CD4-positive, alpha-beta memory T cell (primary cell): ENCODE measurements at regions of chr3 and their contacts with region 1.

Region 1: DNA sequence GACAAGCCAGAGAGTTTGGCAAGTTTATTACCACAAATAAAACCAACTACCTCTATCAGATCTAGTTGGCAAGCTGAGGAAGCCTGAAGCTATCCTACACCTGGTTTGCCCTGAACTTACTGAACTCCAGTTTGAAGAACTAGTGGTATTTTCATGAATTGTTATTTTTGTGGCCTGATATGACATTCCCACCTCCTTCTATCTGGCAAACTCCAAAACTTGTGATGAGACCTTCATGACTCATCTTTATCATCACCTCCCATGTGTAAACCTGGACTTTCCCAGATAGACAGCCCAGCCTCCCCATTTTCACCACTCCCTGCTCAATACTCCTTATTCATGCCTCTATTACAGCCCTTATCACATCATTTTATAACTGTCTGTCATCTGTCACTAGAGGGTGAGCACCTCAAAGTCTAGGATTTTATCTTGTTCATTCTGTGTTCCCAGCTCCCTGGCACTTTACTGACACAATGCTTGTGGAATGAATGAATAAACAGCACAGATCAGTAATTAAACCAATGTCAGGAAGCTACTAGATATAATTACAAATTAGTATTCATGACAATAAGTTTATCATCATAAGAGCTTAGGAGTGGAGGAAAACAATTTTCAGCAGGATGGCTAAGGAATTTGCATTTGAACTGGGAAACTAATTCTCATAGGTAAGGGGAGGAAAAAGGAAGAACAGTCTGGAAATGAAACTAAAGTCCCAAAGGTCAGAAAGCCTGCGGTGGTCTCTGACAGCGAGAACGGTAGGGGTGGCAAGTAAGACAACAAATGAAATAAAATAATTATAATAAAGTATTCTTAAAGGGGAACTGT is 13.2 kb upstream of the TRANK1 start:
- DNase-seq: no peak
- H3K4me3 ChIP-seq: no peak overlapping the region
- H3K4me3 Mint-ChIP-seq: peak overlapping the region in 5 of 8 donors; percentile 4 to 65 (median 40)
- H3K27ac ChIP-seq: no peak overlapping the region
- H3K27ac Mint-ChIP-seq: peak overlapping the region; percentile 61 to 85 (median 77)
- H3K4me1 ChIP-seq: peaks cover 9% of the 10 kb centered on the region
- H3K4me1 Mint-ChIP-seq: peaks cover 10 to 12% (median 11%) of the 10 kb centered on the region in 4 donors
- H3K27me3 ChIP-seq: no peaks in the 10 kb centered on the region
- H3K27me3 Mint-ChIP-seq: no peaks in the 10 kb centered on the region

Region 2: DNA sequence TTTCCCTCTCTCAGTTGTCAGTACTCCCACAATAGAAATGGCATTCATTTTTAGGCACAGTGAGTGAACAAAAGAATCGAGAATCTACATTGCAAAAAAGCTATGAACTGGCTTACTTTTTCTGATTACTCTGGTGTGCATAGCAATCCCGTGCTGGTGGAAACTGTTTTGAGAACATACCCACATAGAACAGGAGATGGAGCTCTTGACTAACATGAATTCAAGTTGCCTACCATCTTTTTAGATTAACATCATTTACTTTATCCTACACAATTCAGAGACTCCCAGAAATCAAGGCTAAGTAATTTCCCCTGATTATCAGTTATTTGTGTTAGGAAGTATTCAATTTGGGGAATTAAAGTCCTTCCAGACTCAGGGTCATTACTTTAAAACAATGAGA is 992.2 kb before region 1 on chr3:
- CTCF ChIA-PET with region 1: no interaction called
- POLR2A ChIA-PET with region 1: no interaction called
- intact Hi-C with region 1: loop called (anchors 10 kb)
- DNase-seq: no peak
- H3K4me3 ChIP-seq: no peak overlapping the region
- H3K4me3 Mint-ChIP-seq: no peak overlapping the region
- H3K27ac ChIP-seq: no peak overlapping the region
- H3K27ac Mint-ChIP-seq: no peak overlapping the region
- H3K4me1 ChIP-seq: no peaks in the 10 kb centered on the region
- H3K4me1 Mint-ChIP-seq: peaks cover 0 to 3% (median 3%) of the 10 kb centered on the region in 4 donors
- H3K27me3 ChIP-seq: no peaks in the 10 kb centered on the region
- H3K27me3 Mint-ChIP-seq: no peaks in the 10 kb centered on the region

Region 3: GRCh38 chr3:36756269-36756668 is 201.8 kb before region 1 on chr3:
- CTCF ChIA-PET with region 1: no interaction called
- POLR2A ChIA-PET with region 1: no interaction called
- intact Hi-C with region 1: no loop called
- DNase-seq: no peak
- H3K4me3 ChIP-seq: no peak overlapping the region
- H3K4me3 Mint-ChIP-seq: no peak overlapping the region
- H3K27ac ChIP-seq: no peak overlapping the region
- H3K27ac Mint-ChIP-seq: no peak overlapping the region
- H3K4me1 ChIP-seq: no peaks in the 10 kb centered on the region
- H3K4me1 Mint-ChIP-seq: no peaks in the 10 kb centered on the region
- H3K27me3 ChIP-seq: peaks cover 4% of the 10 kb centered on the region
- H3K27me3 Mint-ChIP-seq: peaks cover 30 to 34% of the 10 kb centered on the region in 2 donors

Region 4: GRCh38 chr3:36837089-36837488 is 121.0 kb before region 1 on chr3:
- CTCF ChIA-PET with region 1: interaction called, 14 read pairs
- POLR2A ChIA-PET with region 1: interaction called, 3 read pairs
- intact Hi-C with region 1: no loop called
- DNase-seq: no peak
- H3K4me3 ChIP-seq: no peak overlapping the region
- H3K4me3 Mint-ChIP-seq: no peak overlapping the region
- H3K27ac ChIP-seq: no peak overlapping the region
- H3K27ac Mint-ChIP-seq: peak overlapping the region in 1 of 7 donors; percentile 53
- H3K4me1 ChIP-seq: no peaks in the 10 kb centered on the region
- H3K4me1 Mint-ChIP-seq: peaks cover 3 to 11% (median 7%) of the 10 kb centered on the region in 4 donors
- H3K27me3 ChIP-seq: no peaks in the 10 kb centered on the region
- H3K27me3 Mint-ChIP-seq: no peaks in the 10 kb centered on the region

Region 5: GRCh38 chr3:36868614-36869436 is 89.2 kb before region 1 on chr3:
- CTCF ChIA-PET with region 1: interaction called, 48 read pairs
- POLR2A ChIA-PET with region 1: interaction called, 4 read pairs
- intact Hi-C with region 1: loop called (anchors 1 kb)
- DNase-seq: peak; percentile 46 to 57 (median 48)
- H3K4me3 ChIP-seq: no peak overlapping the region
- H3K4me3 Mint-ChIP-seq: peak overlapping the region in 3 of 8 donors; percentile 4 to 49 (median 31)
- H3K27ac ChIP-seq: no peak overlapping the region
- H3K27ac Mint-ChIP-seq: peak overlapping the region in 4 of 7 donors; percentile 45 to 83 (median 74)
- H3K4me1 ChIP-seq: peaks cover 10% of the 10 kb centered on the region
- H3K4me1 Mint-ChIP-seq: peaks cover 21 to 44% (median 35%) of the 10 kb centered on the region in 4 donors
- H3K27me3 ChIP-seq: no peaks in the 10 kb centered on the region
- H3K27me3 Mint-ChIP-seq: no peaks in the 10 kb centered on the region

Region 6: GRCh38 chr3:36911990-36912804 is 45.9 kb before region 1 on chr3:
- CTCF ChIA-PET with region 1: interaction called, 100 read pairs
- POLR2A ChIA-PET with region 1: interaction called, 7 read pairs
- intact Hi-C with region 1: loop called (anchors 1 kb)
- DNase-seq: peak; percentile 54 to 84 (median 65)
- H3K4me3 ChIP-seq: peak overlapping the region; percentile 18 to 41
- H3K4me3 Mint-ChIP-seq: peak overlapping the region; percentile 61 to 84 (median 79)
- H3K27ac ChIP-seq: peak overlapping the region; percentile 72
- H3K27ac Mint-ChIP-seq: peak overlapping the region; percentile 66 to 95 (median 84)
- H3K4me1 ChIP-seq: peaks cover 38% of the 10 kb centered on the region
- H3K4me1 Mint-ChIP-seq: peaks cover 24 to 43% (median 33%) of the 10 kb centered on the region in 4 donors
- H3K27me3 ChIP-seq: no peaks in the 10 kb centered on the region
- H3K27me3 Mint-ChIP-seq: no peaks in the 10 kb centered on the region

Region 7: DNA sequence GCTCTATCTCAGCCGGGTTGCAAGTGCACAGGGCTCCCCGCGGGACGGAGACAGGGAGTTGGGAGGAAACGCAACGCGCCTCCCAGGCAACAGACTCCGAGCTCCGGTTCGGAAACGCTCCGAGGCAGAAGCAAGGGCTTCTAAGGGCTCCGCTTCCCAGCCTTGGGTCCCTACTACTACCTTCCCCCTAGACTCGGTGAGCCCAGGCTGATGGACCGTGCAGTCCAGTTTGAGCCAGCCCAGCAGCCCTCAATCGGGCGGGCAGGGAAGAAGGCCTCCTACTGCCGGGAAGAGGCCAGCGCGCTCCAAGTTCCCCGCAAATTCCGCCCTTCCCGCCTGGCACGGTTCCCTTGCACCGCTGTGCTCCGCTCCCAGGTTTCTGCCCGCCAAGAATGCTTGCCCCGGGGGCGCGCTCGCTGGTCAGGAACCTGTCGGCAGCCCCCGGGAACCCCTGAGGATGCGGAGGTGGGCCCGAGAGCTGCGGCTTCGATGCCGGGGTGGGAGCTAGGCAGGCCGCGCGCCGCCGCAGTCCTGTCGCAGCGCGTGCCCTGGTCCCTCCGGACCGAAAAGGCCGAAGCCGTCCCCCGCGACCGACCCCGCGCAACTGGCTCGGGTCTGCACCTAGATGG is 13.9 kb before region 1 on chr3:
- CTCF ChIA-PET with region 1: interaction called, 40 read pairs
- POLR2A ChIA-PET with region 1: interaction called, 27 read pairs
- intact Hi-C with region 1: no loop called
- DNase-seq: peak; percentile 25 to 57 (median 34)
- H3K4me3 ChIP-seq: peak overlapping the region; percentile 21 to 80
- H3K4me3 Mint-ChIP-seq: peak overlapping the region; percentile 82 to 90 (median 86)
- H3K27ac ChIP-seq: peak overlapping the region; percentile 67
- H3K27ac Mint-ChIP-seq: peak overlapping the region; percentile 61 to 87 (median 80)
- H3K4me1 ChIP-seq: peaks cover 13% of the 10 kb centered on the region
- H3K4me1 Mint-ChIP-seq: peaks cover 7 to 43% (median 26%) of the 10 kb centered on the region in 4 donors
- H3K27me3 ChIP-seq: no peaks in the 10 kb centered on the region
- H3K27me3 Mint-ChIP-seq: no peaks in the 10 kb centered on the region